ENCODE measurements at regions of chr1 and their contacts with region 1.

Region 1: GRCh38 chr1:23634842-23635651 is 56.6 kb upstream of the RPL11 start:
- DNase-seq: peak; percentile 58 to 66 (median 63)
- H3K4me3 ChIP-seq: peak overlapping the region; percentile 44 to 81 (median 50)
- H3K4me3 Mint-ChIP-seq: peak overlapping the region; percentile 78 to 83
- H3K27ac ChIP-seq: peak overlapping the region in 1 of 2 donors; percentile 47
- H3K27ac Mint-ChIP-seq: peak overlapping the region in 1 of 7 donors; percentile 60
- H3K4me1 ChIP-seq: peaks cover 4 to 6% of the 10 kb centered on the region in 2 donors
- H3K4me1 Mint-ChIP-seq: peaks cover 12% of the 10 kb centered on the region
- H3K27me3 ChIP-seq: peaks cover 0 to 3% of the 10 kb centered on the region in 2 donors
- H3K27me3 Mint-ChIP-seq: peaks cover 13 to 27% (median 16%) of the 10 kb centered on the region in 3 donors
- CTCF ChIP-seq: peak; percentile 87

Region 2: DNA sequence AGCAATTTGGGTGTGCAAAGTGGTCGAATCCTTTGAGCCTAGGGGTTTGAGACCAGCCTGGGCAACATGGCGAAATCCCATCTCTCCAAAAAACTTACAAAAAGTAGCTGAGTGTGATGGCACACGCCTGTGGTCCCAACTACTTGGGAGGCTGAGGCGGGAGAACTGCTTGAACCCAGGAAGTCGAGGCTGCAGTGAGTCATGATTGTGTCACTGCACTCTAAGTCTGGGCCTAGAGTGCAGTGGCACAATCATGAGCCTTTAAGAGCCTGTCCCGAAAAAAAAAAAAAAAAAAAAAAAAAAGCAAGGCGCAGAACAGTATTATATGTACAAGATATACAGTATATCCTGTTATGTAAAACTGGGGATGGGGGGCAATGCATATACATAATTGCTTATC is 392.6 kb before region 1 on chr1:
- intact Hi-C with region 1: no loop called
- DNase-seq: no peak
- H3K4me3 ChIP-seq: no peak overlapping the region
- H3K4me3 Mint-ChIP-seq: no peak overlapping the region
- H3K27ac ChIP-seq: no peak overlapping the region
- H3K27ac Mint-ChIP-seq: no peak overlapping the region
- H3K4me1 ChIP-seq: no peaks in the 10 kb centered on the region
- H3K4me1 Mint-ChIP-seq: no peaks in the 10 kb centered on the region
- H3K27me3 ChIP-seq: no peaks in the 10 kb centered on the region
- H3K27me3 Mint-ChIP-seq: peaks cover 3 to 7% (median 4%) of the 10 kb centered on the region in 3 donors
- CTCF ChIP-seq: no peak

Region 3: GRCh38 chr1:23436520-23437354 is 198.3 kb before region 1 on chr1:
- intact Hi-C with region 1: no loop called
- DNase-seq: no peak
- H3K4me3 ChIP-seq: no peak overlapping the region
- H3K4me3 Mint-ChIP-seq: peak overlapping the region in 1 of 2 donors; percentile 26
- H3K27ac ChIP-seq: no peak overlapping the region
- H3K27ac Mint-ChIP-seq: no peak overlapping the region
- H3K4me1 ChIP-seq: no peaks in the 10 kb centered on the region
- H3K4me1 Mint-ChIP-seq: no peaks in the 10 kb centered on the region
- H3K27me3 ChIP-seq: peaks cover 0 to 2% of the 10 kb centered on the region in 2 donors
- H3K27me3 Mint-ChIP-seq: peaks cover 7 to 19% (median 17%) of the 10 kb centered on the region in 3 donors
- CTCF ChIP-seq: no peak

Region 4: GRCh38 chr1:23496490-23497181 is 138.4 kb before region 1 on chr1:
- intact Hi-C with region 1: loop called (anchors 5 kb)
- DNase-seq: no peak
- H3K4me3 ChIP-seq: no peak overlapping the region
- H3K4me3 Mint-ChIP-seq: no peak overlapping the region
- H3K27ac ChIP-seq: no peak overlapping the region
- H3K27ac Mint-ChIP-seq: peak overlapping the region in 2 of 7 donors; percentile 87 to 96
- H3K4me1 ChIP-seq: peaks cover 15 to 16% of the 10 kb centered on the region in 2 donors
- H3K4me1 Mint-ChIP-seq: peaks cover 14% of the 10 kb centered on the region
- H3K27me3 ChIP-seq: no peaks in the 10 kb centered on the region
- H3K27me3 Mint-ChIP-seq: peaks cover 3 to 13% (median 13%) of the 10 kb centered on the region in 3 donors
- CTCF ChIP-seq: no peak

Region 5: GRCh38 chr1:23539698-23540266 is 95.3 kb before region 1 on chr1:
- intact Hi-C with region 1: loop called (anchors 1 to 2 kb)
- DNase-seq: peak; percentile 95 to 99 (median 97)
- H3K4me3 ChIP-seq: no peak overlapping the region
- H3K4me3 Mint-ChIP-seq: peak overlapping the region in 1 of 2 donors; percentile 6
- H3K27ac ChIP-seq: peak overlapping the region in 1 of 2 donors; percentile 61
- H3K27ac Mint-ChIP-seq: peak overlapping the region in 6 of 7 donors; percentile 73 to 90 (median 86)
- H3K4me1 ChIP-seq: peaks cover 38 to 50% of the 10 kb centered on the region in 2 donors
- H3K4me1 Mint-ChIP-seq: peaks cover 34% of the 10 kb centered on the region
- H3K27me3 ChIP-seq: no peaks in the 10 kb centered on the region
- H3K27me3 Mint-ChIP-seq: peaks cover 0 to 9% (median 4%) of the 10 kb centered on the region in 3 donors
- CTCF ChIP-seq: peak; percentile 90

Region 6: GRCh38 chr1:23601071-23601967 is 33.7 kb before region 1 on chr1:
- intact Hi-C with region 1: no loop called
- DNase-seq: no peak
- H3K4me3 ChIP-seq: no peak overlapping the region
- H3K4me3 Mint-ChIP-seq: no peak overlapping the region
- H3K27ac ChIP-seq: no peak overlapping the region
- H3K27ac Mint-ChIP-seq: no peak overlapping the region
- H3K4me1 ChIP-seq: no peaks in the 10 kb centered on the region
- H3K4me1 Mint-ChIP-seq: peaks cover 3% of the 10 kb centered on the region
- H3K27me3 ChIP-seq: no peaks in the 10 kb centered on the region
- H3K27me3 Mint-ChIP-seq: peaks cover 0 to 7% (median 6%) of the 10 kb centered on the region in 3 donors
- CTCF ChIP-seq: no peak

Region 7: DNA sequence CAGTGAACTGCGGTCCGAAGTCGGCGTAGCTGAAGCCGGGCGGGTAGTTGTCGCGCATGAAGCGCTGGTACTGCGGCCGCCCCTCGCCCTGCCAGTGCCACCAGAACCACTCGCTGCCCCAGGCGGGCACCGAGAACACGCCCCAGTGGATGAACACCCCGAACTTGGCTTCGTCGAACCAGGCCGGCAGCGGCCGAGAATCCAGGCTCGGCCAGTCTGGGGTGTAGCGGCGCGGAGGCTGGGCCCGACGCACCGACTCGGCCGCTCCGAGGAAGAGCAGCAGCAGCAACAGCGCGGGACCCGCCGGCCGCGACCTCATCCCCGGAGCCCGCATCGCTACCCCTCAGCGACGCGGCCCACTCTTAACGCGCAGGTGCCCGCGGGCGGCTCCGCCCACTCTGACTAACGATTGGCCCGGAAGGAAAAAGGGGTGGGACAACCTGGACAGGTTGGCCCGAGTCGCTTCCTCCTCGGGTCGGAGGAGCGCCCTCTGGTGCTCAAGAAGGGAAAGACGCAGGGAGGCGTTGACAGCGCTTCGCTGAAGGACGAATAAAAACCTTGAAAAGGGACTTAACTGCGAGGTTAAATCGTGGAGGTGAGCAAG is 233.0 kb after region 1 on chr1 and contains the start of gene FUCA1:
- intact Hi-C with region 1: no loop called
- DNase-seq: peak; percentile 88 to 91 (median 91)
- H3K4me3 ChIP-seq: peak within 1 kb of the TSS; percentile 54 to 82 (median 70)
- H3K4me3 Mint-ChIP-seq: peak within 1 kb of the TSS; percentile 84 to 93
- H3K27ac ChIP-seq: peak within 1 kb of the TSS; percentile 69 to 84
- H3K27ac Mint-ChIP-seq: peak within 1 kb of the TSS; percentile 83 to 91 (median 88)
- H3K4me1 ChIP-seq: peaks cover 51 to 56% of the 10 kb centered on the region in 2 donors
- H3K4me1 Mint-ChIP-seq: peaks cover 56% of the 10 kb centered on the region
- H3K27me3 ChIP-seq: no peaks in the 10 kb centered on the region
- H3K27me3 Mint-ChIP-seq: peaks cover 0 to 13% (median 2%) of the 10 kb centered on the region in 3 donors
- CTCF ChIP-seq: peak; percentile 94
- polyA plus RNA-seq, gene FUCA1: 24.2 to 97.7 (median 96.6) TPM